WTC11 (cell line): ENCODE measurements at regions of chr1 and their contacts with region 1.

Region 1: GRCh38 chr1:201481761-201482493 is 12.9 kb upstream of the PHLDA3 start:
- DNase-seq: peak; percentile 97
- ATAC-seq: peak; percentile 72
- H3K4me3 Mint-ChIP-seq: peak overlapping the region; percentile 84
- H3K27ac Mint-ChIP-seq: no peak overlapping the region
- H3K4me1 Mint-ChIP-seq: peaks cover 29% of the 10 kb centered on the region
- H3K27me3 Mint-ChIP-seq: peaks cover 4% of the 10 kb centered on the region
- CTCF ChIP-seq: peak; percentile 88

Region 2: GRCh38 chr1:201385299-201385891 is 96.5 kb before region 1 on chr1:
- CTCF ChIA-PET with region 1: interaction called, 12 read pairs
- POLR2A ChIA-PET with region 1: no interaction called
- DNase-seq: peak; percentile 90
- ATAC-seq: peak; percentile 95
- H3K4me3 Mint-ChIP-seq: no peak overlapping the region
- H3K27ac Mint-ChIP-seq: no peak overlapping the region
- H3K4me1 Mint-ChIP-seq: no peaks in the 10 kb centered on the region; the same call in 1 of the 2 replicates
- H3K27me3 Mint-ChIP-seq: no peaks in the 10 kb centered on the region
- CTCF ChIP-seq: peak; percentile 81

Region 3: GRCh38 chr1:201456499-201457309 is 25.2 kb before region 1 on chr1:
- CTCF ChIA-PET with region 1: interaction called, 264 read pairs
- POLR2A ChIA-PET with region 1: no interaction called
- DNase-seq: no peak
- ATAC-seq: peak; percentile 58
- H3K4me3 Mint-ChIP-seq: no peak overlapping the region
- H3K27ac Mint-ChIP-seq: peak overlapping the region; percentile 35; the same call in 1 of the 2 replicates
- H3K4me1 Mint-ChIP-seq: peaks cover 37% of the 10 kb centered on the region
- H3K27me3 Mint-ChIP-seq: no peaks in the 10 kb centered on the region; the same call in 1 of the 2 replicates
- CTCF ChIP-seq: no peak

Region 4: GRCh38 chr1:201500670-201501120 is 18.8 kb after region 1 on chr1:
- CTCF ChIA-PET with region 1: interaction called, 144 read pairs
- POLR2A ChIA-PET with region 1: interaction called, 21 read pairs
- DNase-seq: no peak
- ATAC-seq: peak; percentile 16
- H3K4me3 Mint-ChIP-seq: no peak overlapping the region
- H3K27ac Mint-ChIP-seq: peak overlapping the region; percentile 77
- H3K4me1 Mint-ChIP-seq: peaks cover 49% of the 10 kb centered on the region
- H3K27me3 Mint-ChIP-seq: peaks cover 2% of the 10 kb centered on the region
- CTCF ChIP-seq: no peak

Region 5: DNA sequence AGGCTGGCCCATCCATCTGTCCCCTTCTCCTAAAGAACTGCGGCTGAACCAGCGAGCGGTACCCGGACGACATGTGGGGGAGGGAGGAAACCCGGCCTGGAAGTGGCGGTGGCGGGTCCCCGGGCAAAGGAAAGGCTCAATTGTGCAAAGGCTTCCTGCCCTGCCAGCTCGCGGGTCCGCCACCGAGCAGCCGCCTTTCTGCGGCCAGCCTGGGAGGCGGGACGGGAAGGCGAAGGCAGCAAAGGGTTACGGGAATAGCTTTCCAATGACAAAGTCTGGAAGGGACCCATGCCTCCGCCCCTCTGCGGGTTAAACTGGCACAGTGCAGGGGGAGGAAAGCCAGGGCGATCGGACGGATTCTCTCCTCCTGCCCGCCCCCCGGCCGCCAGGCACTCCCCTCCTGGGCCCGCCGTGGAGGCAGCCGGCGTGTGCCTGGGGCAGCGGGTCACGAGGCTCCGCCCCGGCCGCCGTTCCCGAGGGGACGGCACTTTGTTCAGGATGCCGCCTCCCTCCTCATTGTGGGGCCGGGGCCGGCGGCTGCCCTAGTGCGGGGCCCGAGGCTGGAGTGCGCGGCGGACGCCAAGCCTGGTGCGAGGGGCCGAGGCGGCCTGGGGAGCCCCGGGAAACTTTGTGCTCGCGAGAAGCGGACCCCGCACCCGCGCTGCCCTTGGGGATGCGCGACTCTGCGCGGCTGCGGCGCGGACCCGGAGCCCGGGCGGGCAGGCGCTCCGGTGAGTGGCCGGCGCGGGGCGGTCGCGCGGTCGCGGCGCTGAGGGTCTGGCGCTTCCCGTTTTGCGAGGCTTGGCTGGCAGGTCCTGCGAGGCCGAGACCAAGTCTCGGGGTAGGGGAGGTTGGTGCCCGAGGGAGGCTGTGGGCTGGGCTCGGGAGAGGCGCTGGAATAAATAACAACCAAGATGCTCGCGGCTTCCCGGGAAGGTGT is 57.0 kb after region 1 on chr1 and contains the start of gene NAV1:
- CTCF ChIA-PET with region 1: interaction called, 28 read pairs
- POLR2A ChIA-PET with region 1: no interaction called
- DNase-seq: peak; percentile 65
- ATAC-seq: peak; percentile 63
- H3K4me3 Mint-ChIP-seq: peak within 1 kb of the TSS; percentile 88
- H3K27ac Mint-ChIP-seq: no peak within 1 kb of the TSS
- H3K4me1 Mint-ChIP-seq: peaks cover 32% of the 10 kb centered on the region
- H3K27me3 Mint-ChIP-seq: peaks cover 64% of the 10 kb centered on the region
- CTCF ChIP-seq: no peak
- total RNA-seq, gene NAV1: 41.0 to 51.0 TPM (median 46.2 TPM) in 3 replicates

Region 6: GRCh38 chr1:201703621-201704439 is 221.9 kb after region 1 on chr1:
- CTCF ChIA-PET with region 1: interaction called, 26 read pairs
- POLR2A ChIA-PET with region 1: no interaction called
- DNase-seq: peak; percentile 92
- ATAC-seq: peak; percentile 88
- H3K4me3 Mint-ChIP-seq: no peak overlapping the region
- H3K27ac Mint-ChIP-seq: no peak overlapping the region
- H3K4me1 Mint-ChIP-seq: peaks cover 25% of the 10 kb centered on the region
- H3K27me3 Mint-ChIP-seq: no peaks in the 10 kb centered on the region
- CTCF ChIP-seq: peak; percentile 93